ENCODE measurements at regions of chr10 and their contacts with region 1.

Region 1: GRCh38 chr10:5844345-5845048 is 31.3 kb upstream of the GDI2 start:
- DNase-seq: no peak
- H3K4me3 Mint-ChIP-seq: no peak overlapping the region
- H3K27ac Mint-ChIP-seq: peak overlapping the region; percentile 14
- H3K4me1 Mint-ChIP-seq: peaks cover 34% of the 10 kb centered on the region
- H3K27me3 Mint-ChIP-seq: no peaks in the 10 kb centered on the region

Region 2: GRCh38 chr10:5788969-5789368 is 55.5 kb before region 1 on chr10:
- CTCF ChIA-PET with region 1: no interaction called
- intact Hi-C with region 1: no loop called
- DNase-seq: no peak
- H3K4me3 Mint-ChIP-seq: no peak overlapping the region
- H3K27ac Mint-ChIP-seq: no peak overlapping the region
- H3K4me1 Mint-ChIP-seq: peaks cover 12% of the 10 kb centered on the region
- H3K27me3 Mint-ChIP-seq: no peaks in the 10 kb centered on the region

Region 3: GRCh38 chr10:5818894-5819293 is 25.6 kb before region 1 on chr10:
- CTCF ChIA-PET with region 1: interaction called, 5 read pairs
- intact Hi-C with region 1: loop called (anchors 1 kb)
- DNase-seq: no peak
- H3K4me3 Mint-ChIP-seq: no peak overlapping the region
- H3K27ac Mint-ChIP-seq: no peak overlapping the region
- H3K4me1 Mint-ChIP-seq: peaks cover 58% of the 10 kb centered on the region
- H3K27me3 Mint-ChIP-seq: no peaks in the 10 kb centered on the region

Region 4: DNA sequence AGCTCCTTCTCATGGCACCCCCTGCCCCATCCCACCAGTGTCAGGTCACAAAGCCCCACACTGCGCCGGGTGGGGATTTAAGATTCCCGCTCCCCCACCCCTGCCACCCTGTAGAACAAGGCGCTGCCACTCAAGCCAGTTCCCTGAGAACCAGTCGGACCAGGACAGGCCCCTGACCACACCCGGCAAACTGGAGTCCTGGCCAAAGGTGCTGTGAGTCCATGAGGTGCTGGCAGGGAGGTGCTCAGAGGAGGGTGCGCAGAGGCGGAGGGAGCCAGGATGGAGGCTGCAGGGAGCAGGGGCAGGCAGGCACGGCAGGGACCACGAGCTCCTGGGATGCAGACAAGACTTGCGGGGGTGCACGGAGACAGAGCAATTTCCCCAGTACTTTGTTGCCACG is 11.6 kb before region 1 on chr10:
- CTCF ChIA-PET with region 1: no interaction called
- intact Hi-C with region 1: no loop called
- DNase-seq: no peak
- H3K4me3 Mint-ChIP-seq: no peak overlapping the region
- H3K27ac Mint-ChIP-seq: no peak overlapping the region
- H3K4me1 Mint-ChIP-seq: no peaks in the 10 kb centered on the region
- H3K27me3 Mint-ChIP-seq: no peaks in the 10 kb centered on the region